MCF 10A (cell line): ENCODE measurements at regions of chr1 and their contacts with region 1.

Region 1: GRCh38 chr1:178470411-178470960 is 26.3 kb downstream of the CLEC20A start:
- DNase-seq: peak; percentile 54
- H3K4me3 Mint-ChIP-seq: no peak overlapping the region
- H3K27ac Mint-ChIP-seq: peak overlapping the region; percentile 85
- H3K4me1 Mint-ChIP-seq: peaks cover 18% of the 10 kb centered on the region
- H3K27me3 Mint-ChIP-seq: no peaks in the 10 kb centered on the region
- CTCF ChIP-seq: no peak

Region 2: DNA sequence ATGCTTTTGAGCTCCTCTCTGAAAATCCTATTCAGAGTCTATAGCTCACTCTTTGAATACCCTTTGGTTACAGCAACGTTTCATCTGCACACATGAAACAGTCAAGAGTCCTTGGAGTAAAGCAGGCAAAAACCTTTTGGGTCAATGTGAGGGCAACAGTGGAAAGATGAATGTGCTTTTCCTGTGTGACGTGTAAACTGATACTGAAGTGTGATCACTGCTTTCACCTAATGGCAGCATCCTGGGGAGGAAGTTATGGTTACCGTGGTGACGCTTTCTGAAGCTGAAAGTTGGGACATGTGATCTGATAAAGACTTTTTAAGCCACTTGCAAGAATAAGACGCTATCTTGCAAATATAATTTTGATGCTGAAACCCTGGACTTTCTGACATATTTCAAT is 660.7 kb before region 1 on chr1:
- CTCF ChIA-PET with region 1: no interaction called
- POLR2A ChIA-PET with region 1: no interaction called
- intact Hi-C with region 1: no loop called
- DNase-seq: no peak
- H3K4me3 Mint-ChIP-seq: no peak overlapping the region
- H3K27ac Mint-ChIP-seq: no peak overlapping the region
- H3K4me1 Mint-ChIP-seq: no peaks in the 10 kb centered on the region
- H3K27me3 Mint-ChIP-seq: no peaks in the 10 kb centered on the region
- CTCF ChIP-seq: no peak

Region 3: GRCh38 chr1:178486100-178487069 is 15.9 kb after region 1 on chr1:
- CTCF ChIA-PET with region 1: interaction called, 4 read pairs
- POLR2A ChIA-PET with region 1: interaction called, 10 read pairs
- intact Hi-C with region 1: no loop called
- DNase-seq: no peak
- H3K4me3 Mint-ChIP-seq: no peak overlapping the region
- H3K27ac Mint-ChIP-seq: no peak overlapping the region
- H3K4me1 Mint-ChIP-seq: no peaks in the 10 kb centered on the region
- H3K27me3 Mint-ChIP-seq: no peaks in the 10 kb centered on the region
- CTCF ChIP-seq: no peak